Tibial artery (tissue), 4 donors: ENCODE measurements at regions of chr2 and their contacts with region 1.

Region 1: DNA sequence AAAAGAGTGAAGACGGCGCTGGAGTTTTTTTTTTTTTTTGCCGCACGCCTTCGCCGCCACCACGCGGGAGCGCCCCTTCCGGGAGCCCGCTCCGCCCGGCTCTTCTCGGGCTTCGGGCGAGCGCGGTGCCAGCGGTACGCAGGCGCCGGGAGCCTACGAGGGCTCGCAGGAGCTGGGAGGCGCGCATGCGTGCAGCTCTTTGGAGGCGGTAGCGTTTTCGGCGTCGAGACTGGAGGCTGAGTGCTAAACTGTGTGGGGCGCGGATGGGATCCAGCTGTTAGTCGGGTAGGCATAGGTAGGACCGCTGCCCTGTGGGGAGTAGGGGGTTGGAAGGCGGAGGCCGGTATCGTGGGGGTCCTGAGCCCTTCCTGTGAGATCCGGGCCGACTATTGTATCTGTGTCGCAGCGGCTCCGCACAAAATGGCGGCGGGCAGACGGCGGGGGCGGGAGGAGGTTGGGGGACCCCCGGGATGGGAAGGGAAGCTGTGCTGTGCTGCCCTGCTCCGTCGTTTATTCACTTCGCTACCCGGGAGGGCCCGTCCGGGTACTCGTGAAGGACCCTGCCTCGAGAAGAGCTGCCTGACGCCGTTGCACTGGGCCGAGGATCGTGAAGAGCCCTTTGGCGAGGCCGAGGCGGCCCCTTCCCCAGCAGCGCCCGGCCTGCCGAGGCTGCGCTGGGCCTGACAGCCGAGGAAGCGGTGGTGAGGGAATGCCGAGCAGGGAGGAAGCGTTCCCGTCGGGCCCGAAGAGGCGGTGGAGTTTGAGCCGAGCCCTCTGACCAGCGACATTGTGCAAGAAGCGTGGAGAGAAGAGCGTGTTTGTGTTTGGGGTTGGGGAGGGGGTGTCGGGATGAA is at the start of gene ZNF638:
- DNase-seq: peak; percentile 91 to 95
- H3K4me3 ChIP-seq: peak within 1 kb of the TSS; percentile 88 to 95
- H3K27ac ChIP-seq: peak within 1 kb of the TSS; percentile 88 to 95
- H3K4me1 ChIP-seq: peaks cover 0 to 44% (median 17%) of the 10 kb centered on the region in 4 donors
- H3K27me3 ChIP-seq: no peaks in the 10 kb centered on the region
- CTCF ChIP-seq: peak; percentile 59 to 76

Region 2: DNA sequence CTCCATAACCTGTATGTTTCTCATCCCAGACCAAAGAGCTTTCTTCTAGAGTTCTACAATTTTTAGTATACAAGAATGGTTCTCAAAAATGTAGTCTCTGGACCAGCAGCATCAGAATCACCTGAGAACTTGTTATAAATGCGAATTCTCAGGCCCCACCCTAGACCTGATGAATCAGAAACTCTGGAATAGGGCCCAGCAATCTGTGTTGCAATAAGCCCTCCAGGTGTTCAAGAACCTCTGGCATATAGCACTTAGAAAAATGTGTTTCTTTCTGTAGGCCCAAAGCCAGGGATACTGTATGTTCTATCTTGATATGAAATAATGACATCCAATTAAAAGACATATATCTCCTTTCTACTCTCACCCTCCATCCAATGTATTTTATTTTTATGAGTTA is 115.3 kb before region 1 on chr2:
- intact Hi-C with region 1: no loop called
- DNase-seq: no peak
- H3K4me3 ChIP-seq: no peak overlapping the region
- H3K27ac ChIP-seq: no peak overlapping the region
- H3K4me1 ChIP-seq: no peaks in the 10 kb centered on the region
- H3K27me3 ChIP-seq: no peaks in the 10 kb centered on the region
- CTCF ChIP-seq: no peak

Region 3: GRCh38 chr2:71226965-71227560 is 104.7 kb before region 1 on chr2 and contains the start of gene PAIP2B:
- intact Hi-C with region 1: loop called (anchors 2 kb)
- DNase-seq: peak; percentile 100
- H3K4me3 ChIP-seq: peak within 1 kb of the TSS; percentile 77 to 97
- H3K27ac ChIP-seq: peak within 1 kb of the TSS; percentile 87 to 90
- H3K4me1 ChIP-seq: peaks cover 3 to 12% (median 8%) of the 10 kb centered on the region in 4 donors
- H3K27me3 ChIP-seq: no peaks in the 10 kb centered on the region
- CTCF ChIP-seq: peak in 1 of 2 experiments; percentile 6

Region 4: GRCh38 chr2:71276311-71277146 is 55.3 kb before region 1 on chr2:
- intact Hi-C with region 1: loop called (anchors 5 kb)
- DNase-seq: peak; percentile 82 to 92
- H3K4me3 ChIP-seq: peak overlapping the region; percentile 59 to 72
- H3K27ac ChIP-seq: peak overlapping the region; percentile 69 to 78
- H3K4me1 ChIP-seq: peaks cover 0 to 19% (median 11%) of the 10 kb centered on the region in 4 donors
- H3K27me3 ChIP-seq: peaks cover 0 to 3% of the 10 kb centered on the region in 2 donors
- CTCF ChIP-seq: peak in 1 of 2 experiments; percentile 15

Region 5: DNA sequence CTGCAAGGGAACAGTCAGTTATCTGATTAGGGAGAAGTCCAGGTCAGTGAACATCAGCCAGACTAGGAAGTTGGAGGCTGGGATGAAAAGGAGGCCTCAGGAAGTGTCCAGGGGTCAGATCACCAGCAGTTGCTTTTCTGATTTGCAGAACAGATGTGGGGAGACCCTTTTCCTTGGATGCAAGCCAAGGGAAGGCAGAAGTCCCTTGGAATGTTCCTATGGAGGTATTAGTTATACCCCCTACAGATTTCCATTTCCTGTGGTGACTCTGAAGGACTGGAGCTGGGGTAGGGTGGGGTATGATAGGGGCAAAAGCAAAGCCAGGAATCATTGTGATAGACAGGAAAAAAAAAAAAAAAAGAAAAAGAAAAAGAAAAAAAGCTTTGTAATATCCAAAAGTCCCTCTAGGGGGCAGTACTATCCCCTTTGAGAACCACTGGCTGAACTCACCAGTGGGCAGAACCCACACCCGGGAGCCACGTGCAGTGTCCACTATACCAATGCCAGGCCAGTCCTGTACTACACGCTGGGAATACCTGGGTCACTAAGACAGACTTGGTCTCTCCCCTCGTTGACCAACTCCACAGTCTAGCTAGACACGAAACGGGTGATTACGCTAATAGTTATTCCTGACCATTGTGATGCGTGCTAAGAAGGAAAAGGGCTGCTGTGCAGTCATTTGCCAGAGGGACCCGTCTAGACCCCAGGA is 128.9 kb after region 1 on chr2:
- intact Hi-C with region 1: loop called (anchors 5 kb)
- DNase-seq: no peak
- H3K4me3 ChIP-seq: no peak overlapping the region
- H3K27ac ChIP-seq: no peak overlapping the region
- H3K4me1 ChIP-seq: peaks cover 0 to 40% (median 25%) of the 10 kb centered on the region in 4 donors
- H3K27me3 ChIP-seq: no peaks in the 10 kb centered on the region
- CTCF ChIP-seq: no peak